ENCODE measurements at regions of chr5 and their contacts with region 1.

Region 1: GRCh38 chr5:88889189-88890069 is 6.4 kb upstream of the MEF2C start:
- DNase-seq: peak; percentile 77
- ATAC-seq: peak; percentile 90 to 92
- H3K4me3 ChIP-seq: peak overlapping the region; percentile 63
- H3K27ac ChIP-seq: peak overlapping the region; percentile 81
- H3K4me1 ChIP-seq: peaks cover 27% of the 10 kb centered on the region
- H3K27me3 ChIP-seq: no peaks in the 10 kb centered on the region
- CTCF ChIP-seq: no peak

Region 2: GRCh38 chr5:88693071-88693932 is 196.1 kb before region 1 on chr5:
- intact Hi-C with region 1: no loop called
- DNase-seq: no peak
- ATAC-seq: no peak
- H3K4me3 ChIP-seq: no peak overlapping the region
- H3K27ac ChIP-seq: no peak overlapping the region
- H3K4me1 ChIP-seq: peaks cover 27% of the 10 kb centered on the region
- H3K27me3 ChIP-seq: peaks cover 98% of the 10 kb centered on the region
- CTCF ChIP-seq: no peak

Region 3: GRCh38 chr5:88732181-88732633 is 157.2 kb before region 1 on chr5:
- intact Hi-C with region 1: loop called (anchors 5 kb)
- DNase-seq: peak; percentile 45
- ATAC-seq: peak in 1 of 2 donors; percentile 58
- H3K4me3 ChIP-seq: no peak overlapping the region
- H3K27ac ChIP-seq: peak overlapping the region; percentile 20
- H3K4me1 ChIP-seq: peaks cover 9% of the 10 kb centered on the region
- H3K27me3 ChIP-seq: no peaks in the 10 kb centered on the region
- CTCF ChIP-seq: no peak